ENCODE measurements at regions of chr2 and their contacts with region 1.

Region 1: DNA sequence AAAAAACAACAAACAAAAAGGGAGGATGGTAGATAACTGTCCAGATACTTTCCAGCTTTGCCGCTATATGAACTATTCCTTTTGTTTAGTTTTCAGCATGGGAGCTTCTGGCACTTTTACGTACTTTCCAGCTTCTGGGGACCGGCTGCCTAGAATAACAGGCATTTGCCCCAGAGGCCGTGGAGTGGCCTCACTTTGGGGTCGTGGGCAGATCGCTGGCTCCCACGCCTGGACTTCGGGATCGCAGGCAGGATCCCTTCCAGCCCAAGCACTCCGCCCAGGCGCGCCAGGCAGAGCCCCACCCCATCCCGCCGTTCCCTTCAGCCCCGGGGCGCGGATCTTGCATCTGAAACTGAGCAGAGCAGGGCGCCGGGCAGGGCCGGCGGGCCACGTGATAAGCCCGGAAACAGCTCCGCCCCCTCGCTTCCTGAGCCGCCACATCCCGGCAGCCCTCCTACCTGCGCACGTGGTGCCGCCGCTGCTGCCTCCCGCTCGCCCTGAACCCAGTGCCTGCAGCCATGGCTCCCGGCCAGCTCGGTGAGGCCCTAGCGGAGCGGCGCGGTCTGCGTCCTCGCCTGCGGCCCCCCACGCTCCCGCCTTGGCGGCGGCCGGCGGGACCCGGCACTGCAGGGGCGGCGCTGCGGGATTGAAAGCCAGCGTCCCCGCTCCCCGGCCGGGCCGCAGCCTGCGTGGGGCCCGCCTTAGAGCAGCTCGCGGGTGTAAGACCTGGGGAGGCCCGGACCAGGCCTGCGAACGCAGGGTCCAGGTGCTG is at the start of gene ATIC:
- DNase-seq: peak; percentile 94
- H3K4me3 Mint-ChIP-seq: peak within 1 kb of the TSS; percentile 97
- H3K27ac Mint-ChIP-seq: peak within 1 kb of the TSS; percentile 96
- H3K4me1 Mint-ChIP-seq: peaks cover 39% of the 10 kb centered on the region
- H3K27me3 Mint-ChIP-seq: no peaks in the 10 kb centered on the region
- total RNA-seq, gene ATIC: 129 to 140 TPM

Region 2: DNA sequence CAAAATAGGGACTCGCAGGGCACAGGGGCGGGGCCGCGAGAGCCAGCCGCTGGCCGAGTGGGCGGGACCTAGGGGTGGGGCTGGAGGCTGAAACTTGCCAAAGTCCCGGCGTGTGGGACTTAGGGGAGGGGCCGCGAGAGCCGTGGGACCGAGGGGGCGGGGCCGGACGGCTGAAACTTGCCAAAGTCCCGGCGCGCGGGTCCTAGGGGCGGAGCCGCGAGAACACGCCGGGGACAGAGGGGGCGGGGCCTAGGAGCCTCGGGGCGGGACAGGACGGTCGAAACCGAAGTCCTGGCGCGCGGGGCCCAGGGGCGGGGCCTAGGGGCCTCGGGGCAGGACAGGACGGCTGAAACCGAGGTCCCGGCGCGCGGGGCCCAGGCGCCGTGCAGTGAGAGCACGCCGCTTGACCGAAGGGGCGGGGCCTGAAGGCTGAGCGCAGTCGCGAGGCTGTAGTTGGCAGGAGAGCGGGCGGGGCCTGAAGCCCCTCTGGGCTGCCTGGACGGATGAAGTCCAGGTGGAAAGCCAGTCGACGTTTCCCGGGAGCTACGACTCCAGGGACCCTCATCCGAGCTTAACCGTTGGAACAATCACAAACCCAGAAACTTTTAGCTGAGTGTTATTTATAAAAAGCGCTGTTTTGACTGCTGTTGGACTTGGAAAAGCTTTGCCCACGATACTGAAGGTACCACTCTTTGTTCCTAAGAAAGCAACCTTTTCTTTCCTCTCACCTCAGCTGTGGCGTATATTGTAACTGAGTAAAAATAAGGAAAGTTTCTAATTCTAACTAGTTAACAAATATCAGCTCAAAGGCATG is 501.9 kb before region 1 on chr2:
- CTCF ChIA-PET with region 1: no interaction called
- POLR2A ChIA-PET with region 1: interaction called, 35 read pairs
- DNase-seq: peak; percentile 100
- H3K4me3 Mint-ChIP-seq: peak overlapping the region; percentile 98
- H3K27ac Mint-ChIP-seq: peak overlapping the region; percentile 93
- H3K4me1 Mint-ChIP-seq: peaks cover 38% of the 10 kb centered on the region
- H3K27me3 Mint-ChIP-seq: peaks cover 9% of the 10 kb centered on the region

Region 3: GRCh38 chr2:215324811-215325210 is 13.0 kb after region 1 on chr2:
- CTCF ChIA-PET with region 1: no interaction called
- POLR2A ChIA-PET with region 1: interaction called, 14 read pairs
- DNase-seq: no peak
- H3K4me3 Mint-ChIP-seq: no peak overlapping the region
- H3K27ac Mint-ChIP-seq: no peak overlapping the region
- H3K4me1 Mint-ChIP-seq: peaks cover 29% of the 10 kb centered on the region
- H3K27me3 Mint-ChIP-seq: no peaks in the 10 kb centered on the region

Region 4: GRCh38 chr2:215332872-215333595 is 21.2 kb after region 1 on chr2:
- CTCF ChIA-PET with region 1: interaction called, 3 read pairs
- POLR2A ChIA-PET with region 1: interaction called, 10 read pairs
- DNase-seq: no peak
- H3K4me3 Mint-ChIP-seq: no peak overlapping the region
- H3K27ac Mint-ChIP-seq: no peak overlapping the region
- H3K4me1 Mint-ChIP-seq: peaks cover 8% of the 10 kb centered on the region
- H3K27me3 Mint-ChIP-seq: no peaks in the 10 kb centered on the region

Measured in activated CD4-positive, alpha-beta memory T cell treated with anti-CD3 and anti-CD28 coated beads, Interleukin-2, amount 10 ng/mL, durations not matched to agents 7 days and 5 days (primary cell).